Calu3 (cell line): ENCODE measurements at regions of chrX and their contacts with region 1.

Region 1: GRCh38 chrX:46642145-46642544 is 68.6 kb downstream of the CHST7 start:
- DNase-seq: no peak
- H3K4me3 Mint-ChIP-seq: no peak overlapping the region
- H3K27ac Mint-ChIP-seq: no peak overlapping the region
- H3K4me1 Mint-ChIP-seq: no peaks in the 10 kb centered on the region
- H3K27me3 Mint-ChIP-seq: no peaks in the 10 kb centered on the region
- CTCF ChIP-seq: no peak

Region 2: GRCh38 chrX:46554942-46555341 is 87.2 kb before region 1 on chrX:
- CTCF ChIA-PET with region 1: interaction called, 3 read pairs
- intact Hi-C with region 1: loop called (anchors 5 kb)
- DNase-seq: no peak
- H3K4me3 Mint-ChIP-seq: no peak overlapping the region
- H3K27ac Mint-ChIP-seq: no peak overlapping the region
- H3K4me1 Mint-ChIP-seq: no peaks in the 10 kb centered on the region
- H3K27me3 Mint-ChIP-seq: no peaks in the 10 kb centered on the region
- CTCF ChIP-seq: no peak

Region 3: DNA sequence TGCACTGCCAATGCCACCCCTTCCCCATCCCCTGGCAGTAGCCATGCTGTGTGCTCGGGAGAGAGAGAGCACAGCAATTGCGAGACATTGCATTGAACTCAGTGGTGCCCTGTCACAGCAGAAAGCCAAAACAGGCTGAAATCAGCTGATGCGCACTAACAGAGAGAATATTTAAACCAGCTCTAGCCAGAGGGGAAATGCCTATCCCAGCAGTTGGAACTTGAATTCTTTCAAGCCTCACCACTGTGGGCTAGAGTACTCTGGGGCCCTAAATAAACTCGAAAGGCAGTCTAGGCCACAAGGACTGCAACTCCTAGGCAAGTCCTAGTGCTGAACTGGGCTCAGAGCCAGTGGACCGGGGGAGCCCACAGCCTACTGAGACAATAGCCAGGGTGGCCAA is 177.0 kb after region 1 on chrX:
- CTCF ChIA-PET with region 1: no interaction called
- intact Hi-C with region 1: no loop called
- DNase-seq: no peak
- H3K4me3 Mint-ChIP-seq: no peak overlapping the region
- H3K27ac Mint-ChIP-seq: no peak overlapping the region
- H3K4me1 Mint-ChIP-seq: no peaks in the 10 kb centered on the region
- H3K27me3 Mint-ChIP-seq: no peaks in the 10 kb centered on the region
- CTCF ChIP-seq: no peak